PC-3 (cell line): ENCODE measurements at regions of chr1 and their contacts with region 1.

Region 1: DNA sequence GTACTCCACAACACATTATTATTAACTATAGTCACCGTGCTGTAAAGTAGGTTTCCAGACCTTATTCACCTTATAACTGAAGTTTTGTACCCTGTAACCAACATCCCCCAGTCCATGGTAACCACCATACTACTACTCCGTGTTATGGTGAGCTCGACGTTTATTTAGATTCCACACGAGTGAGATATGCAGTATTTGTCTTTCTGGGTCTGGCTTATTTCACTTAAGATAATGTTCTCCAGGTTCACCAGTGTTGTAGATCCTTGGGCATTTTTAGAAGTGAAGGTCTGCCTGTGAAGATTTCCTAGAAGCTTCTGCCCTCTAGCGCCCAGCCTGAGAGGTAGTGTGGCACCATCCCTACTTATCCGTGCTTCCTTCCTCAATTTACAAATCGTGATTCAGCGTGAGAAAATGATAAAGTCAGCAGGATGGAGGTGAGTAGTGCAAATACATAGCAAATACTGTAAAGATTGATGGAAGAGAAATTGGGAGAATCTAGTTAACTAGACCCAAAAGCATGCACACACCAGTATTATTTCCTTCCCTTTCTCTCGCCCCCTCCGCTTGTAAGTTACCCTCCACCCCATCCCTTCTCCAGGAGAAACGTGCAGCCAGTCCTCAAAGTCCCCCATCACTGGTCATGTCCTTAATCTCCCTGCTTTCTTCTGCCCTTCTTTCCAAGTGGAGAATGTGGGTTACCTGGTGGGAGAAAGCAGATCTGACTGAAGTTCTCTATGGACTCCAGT is 36.0 kb upstream of the DISC1 start:
- DNase-seq: peak; percentile 81
- ATAC-seq: peak; percentile 99
- H3K4me3 ChIP-seq: no peak overlapping the region
- H3K27ac ChIP-seq: no peak overlapping the region
- H3K4me1 ChIP-seq: peaks cover 3% of the 10 kb centered on the region; the same call in 1 of the 2 replicates
- H3K27me3 ChIP-seq: no peaks in the 10 kb centered on the region
- CTCF ChIP-seq: peak; percentile 95

Region 2: GRCh38 chr1:230348373-230349019 is 1242.1 kb before region 1 on chr1:
- CTCF ChIA-PET with region 1: interaction called, 19 read pairs
- POLR2A ChIA-PET with region 1: no interaction called
- intact Hi-C with region 1: no loop called
- DNase-seq: no peak
- ATAC-seq: no peak
- H3K4me3 ChIP-seq: no peak overlapping the region
- H3K27ac ChIP-seq: no peak overlapping the region
- H3K4me1 ChIP-seq: no peaks in the 10 kb centered on the region
- H3K27me3 ChIP-seq: peaks cover 81% of the 10 kb centered on the region
- CTCF ChIP-seq: no peak

Region 3: DNA sequence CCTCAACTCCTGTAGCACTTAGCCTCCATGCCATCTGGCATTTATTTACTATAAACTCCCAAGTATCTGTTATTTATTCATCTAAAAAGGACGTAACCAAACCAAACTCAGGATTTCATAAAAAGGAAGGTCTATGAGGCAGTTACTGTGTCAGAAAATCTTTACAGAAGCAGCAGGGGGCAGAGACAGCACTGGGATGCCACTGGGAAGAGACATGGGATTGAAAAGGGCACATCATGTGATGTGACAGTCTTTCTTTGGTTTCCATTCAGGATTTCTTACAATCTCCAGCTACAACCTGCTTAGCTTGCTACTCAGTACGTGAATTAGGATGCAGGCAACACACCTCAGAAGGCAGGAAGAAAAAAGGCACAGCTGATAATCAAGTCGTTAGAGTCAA is 221.3 kb before region 1 on chr1:
- CTCF ChIA-PET with region 1: no interaction called
- POLR2A ChIA-PET with region 1: no interaction called
- intact Hi-C with region 1: loop called (anchors 1 kb)
- DNase-seq: peak; percentile 22
- ATAC-seq: peak; percentile 73
- H3K4me3 ChIP-seq: no peak overlapping the region
- H3K27ac ChIP-seq: no peak overlapping the region
- H3K4me1 ChIP-seq: no peaks in the 10 kb centered on the region
- H3K27me3 ChIP-seq: no peaks in the 10 kb centered on the region
- CTCF ChIP-seq: peak; percentile 58